ENCODE measurements at regions of chr1 and their contacts with region 1.

Region 1: GRCh38 chr1:160006312-160006940 is 25.4 kb downstream of the PIGM start:
- DNase-seq: peak; percentile 81
- CTCF ChIP-seq: peak; percentile 97

Region 2: GRCh38 chr1:159214149-159214760 is 792.2 kb before region 1 on chr1:
- CTCF ChIA-PET with region 1: interaction called, 11 read pairs
- POLR2A ChIA-PET with region 1: no interaction called
- DNase-seq: peak; percentile 60
- CTCF ChIP-seq: peak; percentile 86

Region 3: DNA sequence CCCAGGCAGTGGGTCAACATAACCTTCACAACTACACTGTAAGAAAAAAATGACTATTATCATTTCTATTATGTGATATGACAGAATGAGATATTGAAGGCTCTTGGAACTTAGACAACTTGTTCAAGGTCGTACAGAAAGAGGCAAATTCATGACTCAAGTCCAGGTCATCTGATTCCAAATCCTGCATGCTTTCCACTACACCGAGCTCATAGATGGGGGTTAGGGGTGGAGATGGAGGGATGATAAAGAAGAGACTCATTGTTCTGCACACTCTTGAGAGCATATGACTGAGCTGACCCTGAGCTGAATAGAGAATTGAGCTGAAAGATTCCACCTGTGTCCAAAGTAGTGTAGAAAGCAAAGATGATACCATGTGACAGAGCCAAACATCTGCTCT is 201.5 kb before region 1 on chr1:
- CTCF ChIA-PET with region 1: interaction called, 160 read pairs
- POLR2A ChIA-PET with region 1: no interaction called
- DNase-seq: no peak
- CTCF ChIP-seq: no peak

Region 4: DNA sequence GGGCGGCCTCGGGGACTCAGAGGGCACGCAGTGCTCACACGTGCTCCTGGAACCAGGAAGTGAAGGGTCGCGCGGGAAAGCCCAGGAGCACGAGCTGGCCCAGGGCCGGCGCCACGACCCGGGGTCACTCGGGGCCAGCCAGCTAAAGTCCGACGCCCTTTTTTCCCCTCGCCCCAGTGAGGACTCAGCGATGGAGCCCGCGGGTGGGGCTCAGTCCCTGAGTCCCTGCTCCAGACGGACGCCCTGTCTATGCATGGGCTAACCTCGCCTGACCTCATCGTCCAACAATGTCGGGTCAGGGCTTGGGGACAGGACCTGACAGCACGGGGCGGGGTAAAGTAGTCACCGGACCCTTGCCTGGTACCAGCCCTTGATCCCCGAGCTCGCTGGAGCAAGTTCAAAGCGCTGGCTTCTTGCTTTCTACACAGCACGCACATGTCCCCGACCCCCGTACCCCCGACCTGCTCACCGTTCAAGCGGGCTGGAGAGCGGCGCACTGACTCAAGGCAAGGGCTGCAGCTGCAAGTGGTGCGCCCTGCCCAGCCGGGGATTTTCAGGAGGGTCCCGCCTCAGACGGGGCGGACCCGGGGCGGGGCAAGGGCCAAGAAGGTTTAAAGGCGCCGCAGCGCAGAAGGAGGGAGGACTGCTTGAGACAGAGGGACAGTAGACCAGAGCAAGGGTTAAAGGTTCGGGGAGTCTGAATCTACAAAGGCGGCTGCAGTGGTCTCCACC is 81.3 kb before region 1 on chr1 and contains the start of gene TAGLN2:
- CTCF ChIA-PET with region 1: interaction called, 232 read pairs
- POLR2A ChIA-PET with region 1: no interaction called
- DNase-seq: peak; percentile 91
- CTCF ChIP-seq: no peak

Region 5: GRCh38 chr1:159959451-159959850 is 47.0 kb before region 1 on chr1:
- CTCF ChIA-PET with region 1: interaction called, 12 read pairs
- POLR2A ChIA-PET with region 1: no interaction called
- DNase-seq: no peak
- CTCF ChIP-seq: no peak

Region 6: DNA sequence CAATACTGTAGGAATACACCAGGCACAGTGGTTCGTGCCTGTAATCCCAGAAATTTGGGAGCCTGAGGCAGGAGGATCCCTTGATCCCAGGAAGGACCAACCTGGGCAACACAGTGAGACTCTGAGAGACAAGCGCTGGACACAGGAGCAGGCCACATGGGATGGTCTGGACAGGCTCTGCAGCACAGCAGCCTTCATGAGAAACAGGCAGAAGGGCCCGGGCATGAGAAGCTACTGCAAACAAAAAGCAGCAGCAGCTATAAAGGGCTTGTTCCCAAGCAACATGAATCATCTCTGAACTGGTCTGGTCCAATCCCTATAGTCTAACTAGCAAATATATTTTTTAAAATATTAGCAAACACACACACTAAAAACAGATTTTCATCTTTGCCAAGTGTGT is 16.8 kb before region 1 on chr1:
- CTCF ChIA-PET with region 1: interaction called, 25 read pairs
- POLR2A ChIA-PET with region 1: no interaction called
- DNase-seq: no peak
- CTCF ChIP-seq: no peak

Region 7: DNA sequence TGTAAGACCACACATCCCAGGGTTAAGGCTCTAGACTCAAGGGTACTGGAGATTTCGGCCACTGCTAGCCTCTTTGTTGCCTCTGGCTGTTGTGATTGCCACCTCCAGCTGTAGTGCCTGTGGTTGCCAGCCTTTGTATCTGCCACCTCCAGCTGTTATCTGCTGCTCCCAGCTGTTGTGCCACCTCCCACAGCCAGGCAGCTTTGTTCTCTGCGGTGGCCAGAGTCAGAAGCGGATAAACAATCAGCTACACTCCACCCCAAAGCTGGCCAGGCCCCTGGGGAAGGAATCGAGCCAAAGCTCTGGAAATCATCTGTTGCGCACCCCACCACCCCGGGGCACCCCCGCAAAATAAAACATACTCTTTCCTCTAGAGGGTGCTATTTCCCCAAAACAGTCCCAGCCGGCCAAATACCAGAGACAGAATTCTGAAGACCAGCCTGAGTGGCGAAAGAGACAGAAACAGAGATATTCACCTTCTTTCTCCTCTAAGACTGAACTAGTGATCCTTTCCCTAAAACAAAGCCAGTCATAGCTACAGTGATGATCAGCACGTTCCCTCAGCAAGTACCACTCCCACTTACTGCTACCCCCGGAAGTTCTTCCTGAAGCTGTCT is 40.2 kb after region 1 on chr1:
- CTCF ChIA-PET with region 1: interaction called, 15 read pairs
- POLR2A ChIA-PET with region 1: no interaction called
- DNase-seq: peak; percentile 82
- CTCF ChIP-seq: peak; percentile 67